Gastrocnemius medialis (tissue), 4 donors: ENCODE measurements at regions of chr3 and their contacts with region 1.

Region 1: GRCh38 chr3:5026331-5027218 is 47.3 kb downstream of the BHLHE40 start:
- DNase-seq: peak; percentile 70 to 88
- ATAC-seq: peak; percentile 90
- H3K4me3 ChIP-seq: peak overlapping the region; percentile 59 to 84 (median 63)
- H3K27ac ChIP-seq: peak overlapping the region; percentile 74 to 89 (median 82)
- H3K4me1 ChIP-seq: peaks cover 9% of the 10 kb centered on the region in 2 donors
- H3K27me3 ChIP-seq: no peaks in the 10 kb centered on the region
- CTCF ChIP-seq: peak; percentile 57 to 84 (median 76)
- POLR2A ChIP-seq: peak; percentile 26 to 30

Region 2: GRCh38 chr3:4988931-4989834 is 37.4 kb before region 1 on chr3:
- in situ Hi-C with region 1: no loop called
- intact Hi-C with region 1: loop called (anchors 2 kb)
- DNase-seq: peak; percentile 95 to 97
- ATAC-seq: peak; percentile 63 to 73
- H3K4me3 ChIP-seq: no peak overlapping the region
- H3K27ac ChIP-seq: peak overlapping the region; percentile 96 to 100 (median 99)
- H3K4me1 ChIP-seq: peaks cover 48 to 67% of the 10 kb centered on the region in 2 donors
- H3K27me3 ChIP-seq: no peaks in the 10 kb centered on the region
- CTCF ChIP-seq: no peak
- POLR2A ChIP-seq: peak; percentile 70 to 72

Region 3: GRCh38 chr3:5051772-5052171 is 25.2 kb after region 1 on chr3:
- in situ Hi-C with region 1: no loop called
- intact Hi-C with region 1: loop called (anchors 2 kb)
- DNase-seq: peak; percentile 91 to 95
- ATAC-seq: peak; percentile 91 to 94
- H3K4me3 ChIP-seq: no peak overlapping the region
- H3K27ac ChIP-seq: peak overlapping the region; percentile 83 to 92 (median 86)
- H3K4me1 ChIP-seq: peaks cover 43 to 48% of the 10 kb centered on the region in 2 donors
- H3K27me3 ChIP-seq: no peaks in the 10 kb centered on the region
- CTCF ChIP-seq: peak in 1 of 5 experiments; percentile 10
- POLR2A ChIP-seq: peak in 1 of 2 donors; percentile 35

Region 4: DNA sequence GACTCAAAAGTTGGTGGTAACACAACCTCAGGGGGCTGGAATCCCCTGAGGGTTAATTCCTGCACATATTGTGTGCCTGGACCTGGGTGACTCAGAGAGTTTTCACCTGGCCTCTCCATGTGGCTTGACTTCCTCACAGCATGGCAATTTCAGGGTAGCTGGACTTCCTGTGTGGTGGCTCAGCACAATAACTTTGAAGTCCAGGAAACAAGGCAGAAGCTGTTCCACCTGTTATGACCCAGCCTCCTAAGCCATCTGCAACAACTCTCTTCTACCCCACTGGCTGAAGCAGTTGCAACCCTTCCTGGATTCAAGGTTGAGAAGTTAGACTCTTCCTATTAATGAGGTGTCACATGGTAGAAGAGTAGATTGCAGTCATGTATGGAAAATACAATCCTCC is 219.4 kb after region 1 on chr3:
- in situ Hi-C with region 1: no loop called
- intact Hi-C with region 1: no loop called
- DNase-seq: no peak
- ATAC-seq: no peak
- H3K4me3 ChIP-seq: no peak overlapping the region
- H3K27ac ChIP-seq: no peak overlapping the region
- H3K4me1 ChIP-seq: no peaks in the 10 kb centered on the region
- H3K27me3 ChIP-seq: no peaks in the 10 kb centered on the region
- CTCF ChIP-seq: no peak
- POLR2A ChIP-seq: no peak